Aorta (tissue), 5 donors: ENCODE measurements at regions of chr13 and their contacts with region 1.

Region 1: GRCh38 chr13:108087810-108088209 is 127.5 kb downstream of the LIG4 start:
- DNase-seq: no peak
- ATAC-seq: no peak
- H3K4me3 ChIP-seq: no peak overlapping the region
- H3K27ac ChIP-seq: no peak overlapping the region
- H3K4me1 ChIP-seq: no peaks in the 10 kb centered on the region
- H3K27me3 ChIP-seq: no peaks in the 10 kb centered on the region

Region 2: DNA sequence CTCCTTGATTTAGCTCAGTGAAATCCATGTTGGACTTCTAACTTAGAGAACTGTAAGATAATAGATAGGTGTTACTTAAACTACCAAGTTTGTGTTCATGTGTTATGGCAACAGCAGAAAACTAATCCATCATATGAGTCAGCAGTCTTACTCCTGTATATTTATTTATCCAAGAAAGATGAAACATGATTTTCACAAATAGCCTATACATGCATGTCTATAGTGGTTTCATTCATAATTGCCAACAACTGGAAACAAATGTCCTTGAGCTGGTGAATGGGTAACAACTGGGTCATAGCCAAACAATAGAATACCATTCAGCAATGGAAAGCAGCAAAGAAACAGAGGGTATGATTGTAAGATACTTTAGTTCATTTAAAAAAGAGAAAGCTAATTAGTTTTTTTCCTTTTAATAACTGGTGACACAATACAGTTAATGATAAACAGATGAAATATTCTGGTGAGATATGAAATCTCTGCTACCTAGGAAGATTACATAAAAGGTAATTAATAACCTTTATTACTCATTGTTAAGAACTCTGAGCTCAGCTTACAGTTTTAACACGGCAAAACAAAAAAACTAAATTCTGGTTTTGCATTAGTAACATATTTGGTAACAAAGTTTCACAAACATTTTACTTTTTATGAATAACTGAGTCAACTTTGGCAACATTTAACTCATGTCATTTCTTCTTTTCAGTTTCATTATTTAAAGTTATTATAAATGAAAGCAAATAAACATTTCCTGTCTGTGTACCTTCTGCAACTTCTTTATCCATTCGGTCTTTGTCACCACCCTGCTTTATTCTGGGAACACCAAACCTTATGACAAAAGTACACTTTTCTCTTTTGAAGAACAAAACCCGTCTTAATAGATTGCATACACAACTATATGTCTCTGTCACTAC is 53.8 kb before region 1 on chr13:
- intact Hi-C with region 1: loop called in 1 of 2 experiments (anchors 2 kb)
- DNase-seq: no peak
- ATAC-seq: no peak
- H3K4me3 ChIP-seq: no peak overlapping the region
- H3K27ac ChIP-seq: no peak overlapping the region
- H3K4me1 ChIP-seq: no peaks in the 10 kb centered on the region
- H3K27me3 ChIP-seq: no peaks in the 10 kb centered on the region

Region 3: DNA sequence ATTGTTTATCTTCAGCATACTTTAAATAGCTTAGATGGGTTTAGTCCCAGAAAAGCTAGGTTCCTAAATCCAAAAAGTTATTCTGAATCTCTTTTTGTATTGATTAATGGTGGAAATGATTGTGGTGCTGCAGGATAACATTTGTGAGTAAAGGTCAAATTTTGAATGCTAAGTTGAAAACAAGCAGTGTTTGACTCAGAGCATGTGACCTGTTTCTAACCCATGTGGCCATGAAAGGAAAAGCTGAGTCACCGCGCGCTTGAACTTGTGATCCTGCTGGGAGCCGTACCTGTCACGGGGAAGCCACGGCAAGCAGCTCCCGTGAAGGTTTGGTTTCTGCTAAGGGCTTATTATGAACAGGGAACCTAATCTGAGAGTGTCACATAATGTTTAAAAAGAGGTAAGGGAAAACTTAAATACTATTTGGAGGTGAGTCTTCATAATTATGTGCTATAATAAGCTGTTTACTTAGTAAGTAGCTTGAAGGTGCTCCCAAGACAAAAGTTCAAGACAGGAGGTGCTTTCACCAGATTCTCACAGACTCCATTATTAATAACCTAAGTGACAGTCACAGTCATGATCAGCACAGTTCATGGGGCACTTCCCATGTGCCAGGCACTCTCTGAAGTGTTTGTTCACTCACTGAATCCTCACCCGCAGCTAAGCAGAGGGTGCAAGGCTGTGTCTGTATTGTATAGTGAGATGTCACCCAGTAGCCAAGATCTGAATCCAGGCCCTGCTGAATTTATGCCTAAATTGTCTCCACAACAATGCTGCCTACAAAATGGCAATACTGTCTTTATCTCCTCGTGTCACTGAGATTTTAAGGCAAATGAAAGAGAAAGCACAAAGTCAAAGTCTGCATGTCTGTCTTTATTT is 828.1 kb after region 1 on chr13:
- intact Hi-C with region 1: no loop called
- DNase-seq: peak; percentile 93 to 95
- ATAC-seq: peak; percentile 90
- H3K4me3 ChIP-seq: peak overlapping the region in 1 of 2 donors; percentile 47
- H3K27ac ChIP-seq: peak overlapping the region; percentile 94 to 98
- H3K4me1 ChIP-seq: no peaks in the 10 kb centered on the region
- H3K27me3 ChIP-seq: no peaks in the 10 kb centered on the region